Cardiac septum (tissue), 1 donor: ENCODE measurements at regions of chr12 and their contacts with region 1.

Region 1: GRCh38 chr12:98698603-98699463 is 53.7 kb downstream of the APAF1 start:
- DNase-seq: no peak

Region 2: GRCh38 chr12:98998697-98999299 is 300.0 kb after region 1 on chr12:
- intact Hi-C with region 1: loop called (anchors 2 kb)
- DNase-seq: no peak